Ascending aorta (tissue), 2 donors: ENCODE measurements at regions of chr20 and their contacts with region 1.

Region 1: DNA sequence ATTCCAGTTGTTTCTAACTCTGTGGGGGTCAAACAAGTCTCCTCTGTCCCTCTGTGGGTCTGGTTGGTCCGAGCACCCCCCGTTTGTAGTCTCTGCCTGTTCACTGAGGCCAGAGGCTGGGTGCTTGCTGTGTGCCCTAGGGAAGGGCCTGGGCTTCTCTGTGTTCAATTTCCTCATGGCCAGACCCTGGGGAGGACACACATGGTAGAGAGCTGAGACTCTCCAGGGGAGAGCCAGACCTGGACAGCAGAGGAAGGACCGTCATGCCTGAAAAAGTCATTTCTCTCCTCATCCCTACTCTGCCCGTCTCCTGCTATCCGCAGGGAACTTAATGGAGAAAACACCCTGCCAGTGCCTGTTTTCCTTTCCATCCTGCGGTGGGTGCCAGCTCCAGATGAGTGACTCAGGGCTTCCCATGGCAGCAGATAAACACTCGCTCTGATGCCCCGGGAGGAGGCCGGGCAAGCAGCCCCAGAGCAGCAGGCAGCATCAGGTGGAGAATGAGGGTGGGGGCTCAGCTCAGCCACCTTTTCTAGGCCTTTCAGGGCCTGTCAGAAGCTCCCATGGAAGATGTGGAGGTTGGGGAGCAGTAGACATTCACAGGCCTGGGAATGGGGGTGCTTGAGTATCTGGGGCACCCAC is 51.9 kb downstream of the SNAI1 start:
- DNase-seq: peak; percentile 65 to 94
- H3K4me3 ChIP-seq: no peak overlapping the region
- H3K27ac ChIP-seq: peak overlapping the region; percentile 79 to 84
- H3K4me1 ChIP-seq: peaks cover 14 to 33% of the 10 kb centered on the region in 2 donors
- H3K27me3 ChIP-seq: no peaks in the 10 kb centered on the region
- CTCF ChIP-seq: no peak

Region 2: DNA sequence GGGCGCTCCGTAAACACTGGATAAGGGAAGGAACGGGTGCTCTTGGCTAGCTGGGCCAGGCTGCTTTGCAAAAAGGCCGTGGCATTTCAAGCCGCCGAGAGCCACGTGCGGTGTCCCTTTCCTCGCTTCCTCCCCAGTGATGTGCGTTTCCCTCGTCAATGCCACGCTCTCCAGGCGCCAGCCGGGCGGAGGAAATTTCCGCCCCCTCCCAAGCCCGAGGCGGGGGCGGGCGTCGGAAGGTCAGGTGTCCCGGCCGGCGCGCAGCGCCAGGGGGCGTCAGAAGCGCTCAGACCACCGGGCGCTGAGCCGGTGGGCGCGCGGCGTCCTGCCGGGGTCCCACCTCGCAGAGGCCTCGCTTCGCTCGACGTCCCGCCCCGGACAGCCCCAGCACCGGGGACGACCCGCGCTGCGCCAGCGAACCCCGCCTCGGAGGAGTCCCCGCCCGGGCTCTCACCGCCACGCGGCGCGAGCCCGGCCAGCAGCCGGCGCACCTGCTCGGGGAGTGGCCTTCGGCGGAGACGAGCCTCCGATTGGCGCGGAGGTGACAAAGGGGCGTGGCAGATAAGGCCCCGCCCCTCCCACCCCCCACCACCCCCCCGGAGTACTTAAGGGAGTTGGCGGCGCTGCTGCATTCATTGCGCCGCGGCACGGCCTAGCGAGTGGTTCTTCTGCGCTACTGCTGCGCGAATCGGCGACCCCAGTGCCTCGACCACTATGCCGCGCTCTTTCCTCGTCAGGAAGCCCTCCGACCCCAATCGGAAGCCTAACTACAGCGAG is 52.2 kb before region 1 on chr20 and contains the start of gene SNAI1:
- intact Hi-C with region 1: loop called (anchors 2 kb)
- DNase-seq: peak in 1 of 2 donors; percentile 84
- H3K4me3 ChIP-seq: peak within 1 kb of the TSS; percentile 66 to 80
- H3K27ac ChIP-seq: peak within 1 kb of the TSS; percentile 69 to 71
- H3K4me1 ChIP-seq: peaks cover 12 to 37% of the 10 kb centered on the region in 2 donors
- H3K27me3 ChIP-seq: no peaks in the 10 kb centered on the region
- CTCF ChIP-seq: peak; percentile 35 to 84 (median 62)
- total RNA-seq, gene SNAI1: 64.4 TPM

Region 3: GRCh38 chr20:50844430-50845100 is 809.9 kb after region 1 on chr20:
- intact Hi-C with region 1: no loop called
- DNase-seq: peak; percentile 48 to 85
- H3K4me3 ChIP-seq: no peak overlapping the region
- H3K27ac ChIP-seq: peak overlapping the region; percentile 33 to 61
- H3K4me1 ChIP-seq: peaks cover 4 to 28% of the 10 kb centered on the region in 2 donors
- H3K27me3 ChIP-seq: no peaks in the 10 kb centered on the region
- CTCF ChIP-seq: no peak